MCF 10A (cell line): ENCODE measurements at regions of chr1 and their contacts with region 1.

Region 1: DNA sequence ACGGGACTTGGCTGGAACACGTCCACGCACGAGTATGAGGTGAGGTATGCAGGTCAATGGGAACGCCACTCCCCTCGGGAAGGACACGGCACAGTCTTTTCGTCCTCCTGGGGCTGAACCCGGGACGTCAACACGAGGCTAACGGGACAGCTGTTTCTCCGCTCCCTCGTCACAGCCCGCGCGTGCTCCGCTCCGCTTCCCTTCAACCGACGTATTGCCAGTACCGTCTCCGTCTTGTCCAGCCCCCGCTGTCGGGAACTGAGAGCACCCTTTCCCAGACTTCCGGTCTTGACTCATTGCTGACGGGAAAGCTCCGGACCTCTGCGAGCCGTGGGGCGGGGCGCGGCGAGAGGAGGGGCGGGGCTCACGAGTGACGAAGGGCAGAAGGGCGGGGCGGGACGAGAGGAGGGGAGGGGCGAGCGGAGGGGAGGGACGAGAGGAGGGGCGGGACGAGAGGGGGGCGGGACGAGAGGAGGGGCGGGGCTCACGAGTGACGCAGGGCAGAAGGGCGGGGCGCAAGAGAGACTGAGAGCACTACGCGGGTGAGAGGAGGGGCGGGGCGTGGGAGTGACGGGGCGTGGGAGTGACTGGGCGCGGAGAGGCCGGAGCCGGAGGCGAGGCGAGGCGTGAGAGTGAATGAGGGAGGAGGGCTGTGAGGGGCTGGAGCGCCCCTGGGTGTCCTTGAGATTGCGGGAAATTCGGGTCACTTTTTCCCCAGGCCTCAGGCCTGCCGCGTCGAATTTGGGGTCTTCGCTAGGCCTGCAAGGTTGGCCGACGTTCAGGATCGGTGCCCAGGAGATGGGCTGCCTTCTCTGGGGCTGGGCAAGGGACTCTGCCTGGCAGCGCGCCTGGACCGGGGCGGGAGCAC is 22.2 kb upstream of the CFAP126 start:
- DNase-seq: peak; percentile 100
- H3K4me3 Mint-ChIP-seq: peak overlapping the region; percentile 88
- H3K27ac Mint-ChIP-seq: peak overlapping the region; percentile 99
- H3K4me1 Mint-ChIP-seq: peaks cover 16% of the 10 kb centered on the region
- H3K27me3 Mint-ChIP-seq: no peaks in the 10 kb centered on the region
- CTCF ChIP-seq: no peak

Region 2: GRCh38 chr1:161374373-161374772 is 15.6 kb before region 1 on chr1:
- CTCF ChIA-PET with region 1: interaction called, 23 read pairs
- POLR2A ChIA-PET with region 1: interaction called, 11 read pairs
- intact Hi-C with region 1: no loop called
- DNase-seq: peak; percentile 33
- H3K4me3 Mint-ChIP-seq: no peak overlapping the region
- H3K27ac Mint-ChIP-seq: no peak overlapping the region
- H3K4me1 Mint-ChIP-seq: no peaks in the 10 kb centered on the region
- H3K27me3 Mint-ChIP-seq: no peaks in the 10 kb centered on the region
- CTCF ChIP-seq: peak; percentile 38